ENCODE measurements at regions of chr5 and their contacts with region 1.

Region 1: DNA sequence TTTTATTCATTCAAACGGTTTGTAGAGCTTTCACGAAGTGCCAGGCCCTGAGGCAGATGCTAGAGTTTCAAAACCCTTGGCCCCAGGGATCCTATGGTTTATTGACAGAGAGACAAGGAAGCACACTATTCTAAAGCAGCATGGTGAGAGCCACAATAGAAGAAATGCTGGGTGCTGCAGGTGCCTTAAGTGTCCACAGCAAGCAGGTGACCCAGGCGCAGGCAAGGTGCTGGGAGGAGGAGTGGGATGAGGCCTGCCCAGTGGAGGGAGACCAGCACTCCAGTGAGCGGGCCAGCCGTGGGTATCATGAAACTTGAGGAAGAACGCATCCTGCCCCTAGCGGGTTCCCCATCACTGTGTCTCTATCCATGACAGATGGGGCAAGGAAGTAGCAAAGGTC is 71.0 kb downstream of the OSMR start:
- DNase-seq: no peak
- ATAC-seq: no peak
- H3K4me3 ChIP-seq: no peak overlapping the region
- H3K27ac ChIP-seq: no peak overlapping the region
- H3K4me1 ChIP-seq: peaks cover 3% of the 10 kb centered on the region
- H3K27me3 ChIP-seq: no peaks in the 10 kb centered on the region

Region 2: GRCh38 chr5:38666668-38667498 is 249.9 kb before region 1 on chr5:
- intact Hi-C with region 1: no loop called
- DNase-seq: peak; percentile 36 to 78 (median 64)
- ATAC-seq: peak; percentile 94
- H3K4me3 ChIP-seq: no peak overlapping the region
- H3K27ac ChIP-seq: peak overlapping the region; percentile 53
- H3K4me1 ChIP-seq: peaks cover 12% of the 10 kb centered on the region
- H3K27me3 ChIP-seq: no peaks in the 10 kb centered on the region

Region 3: DNA sequence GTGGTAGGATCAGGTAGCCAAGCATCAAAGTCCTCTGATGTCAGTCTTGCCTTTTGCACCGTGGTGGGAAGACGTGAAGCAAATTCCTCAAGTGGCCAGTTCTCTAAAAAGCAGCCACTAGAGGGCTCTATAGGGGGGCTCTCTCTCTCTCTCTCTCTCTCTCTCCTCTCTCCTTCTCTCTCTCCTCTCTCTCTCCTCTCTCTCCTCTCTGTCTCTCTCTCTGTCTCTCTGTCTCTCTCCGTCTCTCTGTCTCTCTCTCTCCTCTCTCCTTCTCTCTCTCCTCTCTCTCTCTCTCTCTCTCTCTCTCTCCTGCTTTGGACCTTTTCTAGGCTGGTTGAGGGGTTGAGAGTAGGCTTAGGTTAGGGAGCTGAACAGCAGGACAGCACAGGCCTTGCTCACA is 84.9 kb before region 1 on chr5:
- intact Hi-C with region 1: loop called in 3 of 4 experiments (anchors 5 to 10 kb)
- DNase-seq: peak in 1 of 3 donors; percentile 29
- ATAC-seq: peak in 1 of 2 donors; percentile 27
- H3K4me3 ChIP-seq: no peak overlapping the region
- H3K27ac ChIP-seq: no peak overlapping the region
- H3K4me1 ChIP-seq: peaks cover 3% of the 10 kb centered on the region
- H3K27me3 ChIP-seq: no peaks in the 10 kb centered on the region

Region 4: DNA sequence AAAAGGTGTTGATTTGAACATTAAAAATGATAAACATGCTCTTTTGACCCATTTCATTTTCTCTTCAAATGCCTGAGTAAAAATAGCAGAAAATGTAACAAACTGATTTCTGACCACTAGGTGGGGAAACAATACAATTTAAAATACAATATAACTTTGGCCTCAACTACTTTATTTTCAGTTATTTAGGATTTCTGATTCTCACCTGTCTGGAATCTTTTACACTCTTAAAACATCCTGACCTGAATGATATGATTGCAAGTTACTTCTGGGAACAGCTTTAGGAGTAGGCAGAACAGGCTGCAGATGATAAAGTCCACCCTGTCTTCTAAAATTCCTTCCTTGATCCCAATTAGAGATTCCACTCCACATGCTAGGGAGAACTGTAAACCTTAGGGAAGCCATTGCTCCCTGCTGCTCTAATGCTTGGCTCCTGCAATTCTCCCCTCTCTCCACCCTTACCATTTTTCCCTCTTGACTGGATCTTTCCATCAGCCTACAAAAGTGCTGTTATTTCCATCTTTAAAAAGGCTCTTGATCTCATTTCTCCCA is 232.3 kb after region 1 on chr5:
- intact Hi-C with region 1: no loop called
- DNase-seq: no peak
- ATAC-seq: no peak
- H3K4me3 ChIP-seq: no peak overlapping the region
- H3K27ac ChIP-seq: no peak overlapping the region
- H3K4me1 ChIP-seq: no peaks in the 10 kb centered on the region
- H3K27me3 ChIP-seq: no peaks in the 10 kb centered on the region

Measured in right cardiac atrium (tissue), 5 donors.